ENCODE measurements at regions of chr1 and their contacts with region 1.

Region 1: GRCh38 chr1:15152318-15153183 is 996 bp upstream of the TMEM51 start:
- DNase-seq: peak in 1 of 2 experiments; percentile 83
- H3K4me3 ChIP-seq: peak overlapping the region; percentile 59 to 84 (median 74)
- H3K27ac ChIP-seq: no peak overlapping the region
- H3K4me1 ChIP-seq: peaks cover 3 to 15% (median 8%) of the 10 kb centered on the region in 4 experiments
- H3K27me3 ChIP-seq: peaks cover 0 to 23% (median 10%) of the 10 kb centered on the region in 4 experiments; a peak in 6 of 7 replicates
- CTCF ChIP-seq: peak; percentile 62 to 69 (median 65)
- EP300 ChIP-seq: no peak
- POLR2A ChIP-seq: no peak; a peak in 1 of 3 replicates
- RAD21 ChIP-seq: peak; percentile 68 to 82

Region 2: DNA sequence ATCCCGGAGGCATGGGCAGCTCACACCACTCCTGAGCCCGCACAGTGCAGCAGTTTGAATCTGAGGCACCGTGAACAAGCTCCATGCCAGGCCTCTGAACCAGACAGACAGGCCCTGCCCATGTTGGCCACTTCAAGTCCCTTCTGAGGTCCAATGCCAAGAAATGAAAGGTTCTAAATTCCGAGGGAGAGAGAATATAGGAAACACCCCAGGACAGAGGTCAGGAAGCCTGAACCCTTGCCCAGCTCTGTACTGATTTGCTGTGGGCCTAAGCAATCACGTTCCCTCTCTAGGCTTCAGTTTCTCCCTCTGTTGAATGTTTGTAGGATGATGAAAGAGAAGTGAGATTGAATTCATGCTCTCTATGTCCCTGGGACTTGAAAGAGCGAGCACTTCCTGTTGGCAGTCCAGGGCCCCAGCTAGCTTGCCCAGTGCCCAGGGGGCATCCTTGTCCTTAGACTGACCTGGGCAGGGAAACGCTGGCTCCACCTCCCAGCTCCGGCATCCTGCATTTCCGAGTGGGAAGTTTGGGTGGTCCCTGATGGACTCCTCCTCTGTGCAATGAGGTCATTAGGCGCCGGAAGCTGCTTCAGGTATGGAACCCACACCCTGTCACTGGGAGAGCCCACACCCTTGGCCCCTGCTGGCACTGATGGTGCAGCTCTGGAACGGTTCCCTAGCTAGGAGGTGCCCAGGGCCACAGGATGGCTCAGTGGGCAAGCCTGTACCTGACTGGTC is 241.4 kb before region 1 on chr1:
- CTCF ChIA-PET with region 1: no interaction called
- POLR2A ChIA-PET with region 1: no interaction called
- DNase-seq: no peak
- H3K4me3 ChIP-seq: no peak overlapping the region
- H3K27ac ChIP-seq: no peak overlapping the region
- H3K4me1 ChIP-seq: peaks cover 2 to 6% (median 4%) of the 10 kb centered on the region in 4 experiments; a peak in 6 of 7 replicates
- H3K27me3 ChIP-seq: no peaks in the 10 kb centered on the region
- CTCF ChIP-seq: no peak
- EP300 ChIP-seq: no peak
- POLR2A ChIP-seq: no peak
- RAD21 ChIP-seq: no peak

Region 3: DNA sequence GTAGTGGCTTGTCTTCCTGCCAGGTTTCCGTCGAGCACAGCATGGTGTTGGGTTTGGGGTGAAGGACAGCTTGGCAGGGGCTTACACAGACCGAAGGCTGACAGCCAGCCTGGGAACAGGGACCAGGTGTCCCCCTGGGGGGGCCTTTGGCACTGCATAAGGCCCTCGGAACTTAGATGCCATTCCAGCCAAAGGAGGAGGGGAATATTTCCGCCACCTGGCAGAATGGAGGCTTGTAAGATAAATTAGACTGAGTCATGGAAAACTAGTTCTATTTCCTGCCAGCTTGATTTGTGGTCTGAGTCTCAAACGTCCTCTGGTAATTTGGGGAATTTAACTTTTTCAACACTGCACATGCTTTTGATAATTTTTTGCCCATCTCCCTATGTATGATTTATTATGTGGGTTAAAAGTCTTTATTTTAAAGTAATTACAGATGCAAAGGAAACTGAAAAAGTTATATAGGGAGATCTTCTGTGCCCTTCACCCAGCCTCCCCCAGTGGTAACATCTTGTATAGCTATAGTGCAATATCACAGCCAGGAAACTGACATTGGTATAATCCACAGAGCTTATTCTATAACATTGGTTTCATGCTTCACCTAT is 10.5 kb before region 1 on chr1:
- CTCF ChIA-PET with region 1: interaction called, 14 read pairs
- POLR2A ChIA-PET with region 1: interaction called, 5 read pairs
- DNase-seq: no peak
- H3K4me3 ChIP-seq: no peak overlapping the region
- H3K27ac ChIP-seq: no peak overlapping the region
- H3K4me1 ChIP-seq: peaks cover 0 to 11% (median 6%) of the 10 kb centered on the region in 4 experiments; a peak in 5 of 7 replicates
- H3K27me3 ChIP-seq: 0 out of 7 replicates have a peak, but pooled peaks cover 0 to 4% (median 0%) of the 10 kb centered on the region in 4 experiments
- CTCF ChIP-seq: no peak
- EP300 ChIP-seq: no peak
- POLR2A ChIP-seq: no peak
- RAD21 ChIP-seq: no peak

Region 4: DNA sequence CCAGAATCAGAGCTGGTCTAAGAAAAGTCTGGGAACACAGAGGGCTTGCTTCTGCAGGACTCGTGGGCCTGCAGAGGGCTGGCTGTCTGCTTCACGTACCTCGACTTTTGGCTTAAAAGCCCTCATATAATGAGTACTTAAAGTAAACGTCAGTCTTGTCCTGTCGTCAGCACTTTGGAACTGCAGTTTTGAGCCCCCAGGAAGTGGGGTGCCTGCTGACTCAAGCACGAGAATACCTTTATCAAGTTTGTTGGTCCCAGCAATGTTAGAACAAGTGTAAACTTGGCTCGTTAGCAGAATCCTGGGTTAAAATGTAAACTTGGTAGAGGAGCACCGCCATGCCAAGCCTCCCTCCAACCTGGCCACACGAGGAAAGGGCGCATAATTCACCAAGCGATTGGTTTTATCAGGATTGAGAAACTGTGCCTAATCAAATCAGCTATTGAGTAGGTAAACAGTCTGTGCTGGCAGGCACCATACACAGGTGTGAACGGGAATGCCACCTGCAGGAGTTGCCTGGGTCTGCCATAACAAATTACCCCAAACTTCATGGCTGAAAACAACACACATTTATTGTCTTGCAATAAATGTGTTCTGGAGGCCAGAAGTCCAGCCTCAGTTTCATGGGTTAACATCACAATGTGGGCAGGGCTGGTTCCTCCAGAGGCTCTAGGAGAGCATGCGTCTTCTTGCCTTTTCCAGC is 49.4 kb after region 1 on chr1:
- CTCF ChIA-PET with region 1: interaction called, 12 read pairs
- POLR2A ChIA-PET with region 1: no interaction called
- DNase-seq: no peak
- H3K4me3 ChIP-seq: no peak overlapping the region
- H3K27ac ChIP-seq: no peak overlapping the region
- H3K4me1 ChIP-seq: peaks cover 17 to 32% (median 26%) of the 10 kb centered on the region in 4 experiments
- H3K27me3 ChIP-seq: no peaks in the 10 kb centered on the region
- CTCF ChIP-seq: no peak
- EP300 ChIP-seq: no peak
- POLR2A ChIP-seq: no peak
- RAD21 ChIP-seq: no peak

Region 5: DNA sequence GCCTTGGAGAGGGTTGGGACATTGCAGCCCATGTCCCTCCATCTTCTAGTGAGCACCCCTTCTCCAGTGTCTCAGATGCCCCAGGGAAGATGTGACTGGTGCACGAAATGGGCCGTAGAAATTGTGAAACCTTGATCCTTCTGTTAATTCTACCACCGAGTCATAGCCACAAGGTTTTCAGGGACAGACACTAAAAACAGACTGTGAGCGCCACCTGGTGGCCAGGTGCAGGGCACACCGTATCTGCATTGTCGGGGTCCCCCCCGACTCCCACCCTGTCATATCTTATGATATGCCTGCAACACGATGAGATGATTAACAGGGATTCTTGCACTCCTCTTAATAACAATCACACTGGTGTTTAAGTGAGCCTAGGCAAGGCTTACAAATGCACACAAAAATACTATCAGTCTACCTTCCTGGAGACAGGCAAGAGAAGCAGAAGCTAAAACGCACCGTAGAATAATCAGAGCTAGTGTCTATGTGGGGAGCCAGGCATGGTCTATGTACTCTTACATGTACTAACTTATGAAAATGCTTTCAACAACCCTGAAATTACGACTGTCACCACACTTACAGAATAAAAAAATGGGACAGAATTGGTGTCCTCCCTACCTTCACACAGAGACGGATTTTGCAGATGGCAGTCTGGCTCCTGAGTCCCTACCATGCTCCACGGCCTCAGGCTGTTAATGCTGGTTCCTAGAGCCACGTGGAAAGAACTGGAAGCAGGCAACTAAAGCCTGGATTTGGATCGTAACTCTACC is 152.3 kb after region 1 on chr1:
- CTCF ChIA-PET with region 1: interaction called, 14 read pairs
- POLR2A ChIA-PET with region 1: no interaction called
- DNase-seq: peak; percentile 17 to 89
- H3K4me3 ChIP-seq: no peak overlapping the region
- H3K27ac ChIP-seq: no peak overlapping the region
- H3K4me1 ChIP-seq: no peaks in the 10 kb centered on the region
- H3K27me3 ChIP-seq: no peaks in the 10 kb centered on the region; a peak in 1 of 7 replicates
- CTCF ChIP-seq: peak; percentile 72 to 86 (median 81)
- EP300 ChIP-seq: no peak
- POLR2A ChIP-seq: no peak
- RAD21 ChIP-seq: peak; percentile 86 to 87

Measured in H1 (cell line).